Heart right ventricle (tissue), 16 donors: ENCODE measurements at regions of chr11 and their contacts with region 1.

Region 1: DNA sequence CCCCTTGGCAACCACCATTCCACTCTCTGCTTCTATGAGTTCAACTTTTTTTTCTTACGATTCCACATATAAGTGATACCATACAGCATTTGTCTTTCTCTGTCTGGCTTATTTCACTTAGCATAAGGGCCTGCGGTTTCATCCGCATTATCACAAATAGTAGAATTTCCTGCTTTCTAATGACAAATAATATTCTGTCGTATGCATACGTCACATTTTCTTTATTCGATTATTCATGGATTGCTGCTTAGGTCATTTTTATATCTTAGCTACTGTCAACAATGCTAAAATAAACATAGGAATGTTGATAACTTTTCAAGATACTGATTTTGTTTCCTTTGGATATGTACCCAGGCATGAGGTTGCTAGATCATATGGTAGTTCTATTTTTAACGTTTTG is 507.8 kb upstream of the CADM1 start:
- DNase-seq: no peak
- ATAC-seq: no peak
- H3K4me3 ChIP-seq: no peak overlapping the region
- H3K27ac ChIP-seq: no peak overlapping the region
- H3K4me1 ChIP-seq: no peaks in the 10 kb centered on the region
- H3K27me3 ChIP-seq: no peaks in the 10 kb centered on the region
- CTCF ChIP-seq: no peak

Region 2: DNA sequence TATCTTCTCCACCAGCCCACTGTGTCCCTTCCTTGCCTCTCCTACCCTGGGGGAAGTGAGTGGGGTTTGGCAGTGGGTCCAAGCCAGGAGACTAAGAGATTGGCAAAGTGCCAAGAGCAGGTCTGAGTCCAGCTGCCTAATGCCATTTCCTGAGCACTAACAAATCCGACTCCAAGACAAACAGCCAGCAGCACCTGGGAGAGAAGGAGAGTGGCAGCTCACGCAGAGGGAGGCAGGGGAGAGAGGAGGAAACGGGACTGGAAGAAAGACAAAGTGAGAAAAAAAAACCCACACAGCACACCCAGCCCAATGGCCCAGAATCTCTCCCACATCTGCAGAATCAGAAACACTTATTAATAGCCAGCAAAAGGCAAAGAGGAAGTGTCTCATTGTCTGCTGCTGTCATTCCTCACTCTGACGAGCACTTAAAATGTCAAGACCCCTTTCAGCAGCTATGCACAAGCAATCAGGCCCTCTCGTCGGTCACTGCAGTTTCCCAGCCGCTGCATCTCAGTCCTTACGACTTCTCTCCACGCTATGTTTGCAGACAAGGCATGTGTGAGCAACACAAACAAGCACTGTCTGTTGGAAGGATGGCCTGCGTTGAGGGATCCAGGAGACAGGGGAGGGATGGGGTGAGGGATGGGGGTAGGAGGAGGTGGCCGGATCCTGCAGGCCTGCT is 50.6 kb after region 1 on chr11:
- intact Hi-C with region 1: no loop called
- DNase-seq: no peak
- ATAC-seq: peak in 2 of 8 donors; percentile 24 to 26
- H3K4me3 ChIP-seq: no peak overlapping the region
- H3K27ac ChIP-seq: no peak overlapping the region
- H3K4me1 ChIP-seq: peaks cover 0 to 13% (median 4%) of the 10 kb centered on the region in 9 donors
- H3K27me3 ChIP-seq: peaks cover 0 to 15% (median 0%) of the 10 kb centered on the region in 7 donors
- CTCF ChIP-seq: no peak

Region 3: DNA sequence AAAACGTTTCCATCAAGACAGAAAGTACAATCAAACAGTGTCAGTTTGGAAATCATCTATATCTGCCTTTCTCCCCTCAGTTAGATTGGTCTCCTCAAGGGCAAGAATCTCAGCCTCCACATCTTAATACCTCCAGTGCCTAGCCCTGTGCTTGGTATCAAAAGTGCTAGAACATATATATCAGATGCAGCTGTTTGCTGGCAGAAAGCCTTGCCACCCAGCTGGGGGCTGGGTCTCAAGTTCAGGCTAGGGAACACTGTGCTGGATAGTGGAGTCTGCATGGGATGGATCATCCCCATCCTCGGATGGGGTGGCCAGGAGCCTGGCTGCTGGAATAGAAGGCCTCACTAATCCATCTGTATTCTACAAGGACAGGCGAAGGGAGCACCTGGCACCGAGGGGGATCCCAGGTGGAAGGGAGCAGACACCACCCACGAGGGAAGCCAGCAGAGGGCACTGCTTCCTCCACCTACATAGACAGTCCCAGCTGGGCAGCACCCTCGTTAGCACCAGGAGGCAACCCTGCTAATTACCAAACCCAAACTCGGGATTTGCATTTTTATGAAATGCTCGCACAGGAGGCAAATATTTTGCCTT is 158.6 kb after region 1 on chr11:
- intact Hi-C with region 1: loop called in 1 of 10 experiments (anchors 10 kb)
- DNase-seq: peak in 1 of 2 donors; percentile 2
- ATAC-seq: no peak
- H3K4me3 ChIP-seq: no peak overlapping the region
- H3K27ac ChIP-seq: no peak overlapping the region
- H3K4me1 ChIP-seq: peaks cover 0 to 3% (median 0%) of the 10 kb centered on the region in 9 donors
- H3K27me3 ChIP-seq: peaks cover 0 to 23% (median 11%) of the 10 kb centered on the region in 7 donors
- CTCF ChIP-seq: peak in 3 of 9 donors; percentile 19 to 34 (median 27)